Activated CD4-positive, alpha-beta T cell treated with anti-CD3 and anti-CD28 coated beads for 36 hours (primary cell): ENCODE measurements at regions of chr3 and their contacts with region 1.

Region 1: DNA sequence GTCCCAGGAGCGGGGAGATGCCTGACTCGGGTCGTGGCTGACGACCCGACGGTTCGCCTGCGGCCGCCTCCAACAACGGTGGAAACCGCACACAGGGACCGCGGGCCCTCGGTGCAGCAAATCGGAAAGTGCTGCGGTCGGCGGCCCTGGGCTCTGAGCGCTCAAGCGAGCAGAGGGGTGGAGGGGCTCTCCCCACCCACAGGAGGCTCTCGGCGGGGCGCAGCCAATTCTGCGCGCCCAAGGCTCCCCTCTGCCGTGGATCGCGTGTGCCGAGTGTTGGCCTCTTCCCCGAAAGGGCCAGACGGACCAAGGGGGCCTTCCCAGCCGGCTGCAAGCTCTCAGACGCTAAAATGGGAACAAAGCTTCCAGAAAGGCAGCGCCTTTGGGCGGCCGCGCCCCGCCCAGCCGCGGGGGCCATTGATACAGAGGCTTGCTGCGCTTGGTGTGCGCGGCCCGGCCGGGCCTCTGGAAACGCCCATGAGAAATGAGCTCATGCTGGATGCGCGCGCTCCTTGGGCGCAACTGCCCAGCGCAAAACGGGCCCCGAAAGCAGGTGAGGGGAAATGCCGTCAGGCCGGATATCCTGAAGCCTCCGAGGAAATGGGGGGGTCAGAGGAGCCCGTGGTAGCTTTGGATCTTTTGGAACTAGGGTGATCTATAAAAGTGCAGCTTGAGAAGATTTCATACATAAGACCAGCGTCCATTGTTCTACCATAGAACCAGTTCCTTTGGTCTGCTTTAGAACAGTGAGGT is 1.2 kb upstream of the GSK3B start:
- DNase-seq: peak; percentile 94
- ATAC-seq: peak; percentile 35
- H3K4me3 Mint-ChIP-seq: no peak overlapping the region
- H3K27ac Mint-ChIP-seq: no peak overlapping the region
- H3K4me1 Mint-ChIP-seq: peaks cover 17% of the 10 kb centered on the region
- H3K27me3 Mint-ChIP-seq: no peaks in the 10 kb centered on the region

Region 2: GRCh38 chr3:119240591-119241434 is 854.6 kb before region 1 on chr3 and contains the start of gene B4GALT4:
- CTCF ChIA-PET with region 1: no interaction called
- POLR2A ChIA-PET with region 1: no interaction called
- intact Hi-C with region 1: loop called (anchors 1 to 2 kb)
- DNase-seq: peak; percentile 86
- ATAC-seq: peak; percentile 75
- H3K4me3 Mint-ChIP-seq: peak within 1 kb of the TSS; percentile 89
- H3K27ac Mint-ChIP-seq: peak within 1 kb of the TSS; percentile 99
- H3K4me1 Mint-ChIP-seq: peaks cover 40% of the 10 kb centered on the region
- H3K27me3 Mint-ChIP-seq: no peaks in the 10 kb centered on the region
- total RNA-seq, gene B4GALT4: 16.6 to 16.7 TPM

Region 3: DNA sequence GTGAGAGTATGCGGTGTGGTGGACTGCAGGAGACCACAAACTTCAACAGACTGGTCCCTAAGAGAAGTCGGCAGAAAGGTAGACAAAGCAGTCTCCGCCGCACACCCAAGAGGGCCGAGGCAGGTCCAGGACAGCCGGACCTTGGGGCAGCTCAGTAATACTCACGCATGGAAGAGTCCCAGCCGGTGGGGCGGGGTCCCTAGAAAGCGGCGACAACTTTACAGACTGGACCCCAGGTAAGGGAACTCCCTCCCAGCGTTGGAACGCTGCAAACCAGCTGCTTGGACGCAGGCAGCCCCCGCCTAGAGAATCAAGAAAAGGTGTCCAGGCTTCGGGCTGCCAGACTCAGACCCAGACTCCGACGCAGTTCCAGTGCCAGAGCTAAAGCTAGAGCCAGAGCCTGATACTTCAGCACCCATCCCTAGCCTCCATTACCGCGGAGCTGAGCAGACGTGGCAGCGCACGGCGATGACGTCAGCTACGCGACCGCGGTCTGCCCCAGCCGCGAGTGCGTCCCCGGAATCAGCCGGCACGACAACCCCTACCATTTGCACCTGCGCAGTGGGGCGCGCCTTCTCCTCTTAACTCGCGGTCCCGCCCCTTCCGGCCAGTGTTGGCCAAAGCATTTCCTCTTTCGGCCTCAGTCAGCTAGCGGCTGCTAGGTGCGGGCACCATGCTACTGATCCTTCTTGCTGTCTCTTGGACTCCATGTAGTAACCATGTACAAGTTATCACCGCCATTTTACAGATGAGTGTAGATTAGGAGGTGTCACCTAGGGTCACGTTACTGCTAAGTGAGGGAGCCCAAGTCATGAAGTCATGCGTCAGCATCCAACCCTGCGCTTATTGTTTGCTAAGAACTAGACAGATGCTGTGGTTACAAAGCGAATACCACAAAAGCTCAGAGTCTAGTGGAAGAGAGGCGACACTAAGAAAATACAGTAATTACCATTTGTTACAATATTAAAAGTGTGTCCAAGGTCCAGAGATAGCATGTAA is 631.9 kb before region 1 on chr3 and contains the start of gene TMEM39A:
- CTCF ChIA-PET with region 1: interaction called, 5 read pairs
- POLR2A ChIA-PET with region 1: interaction called, 7 read pairs
- intact Hi-C with region 1: loop called (anchors 1 to 10 kb)
- DNase-seq: peak; percentile 99
- ATAC-seq: peak; percentile 89
- H3K4me3 Mint-ChIP-seq: peak within 1 kb of the TSS; percentile 99
- H3K27ac Mint-ChIP-seq: peak within 1 kb of the TSS; percentile 91
- H3K4me1 Mint-ChIP-seq: peaks cover 41% of the 10 kb centered on the region
- H3K27me3 Mint-ChIP-seq: no peaks in the 10 kb centered on the region
- total RNA-seq, gene TMEM39A: 24.5 to 30.5 TPM

Region 4: DNA sequence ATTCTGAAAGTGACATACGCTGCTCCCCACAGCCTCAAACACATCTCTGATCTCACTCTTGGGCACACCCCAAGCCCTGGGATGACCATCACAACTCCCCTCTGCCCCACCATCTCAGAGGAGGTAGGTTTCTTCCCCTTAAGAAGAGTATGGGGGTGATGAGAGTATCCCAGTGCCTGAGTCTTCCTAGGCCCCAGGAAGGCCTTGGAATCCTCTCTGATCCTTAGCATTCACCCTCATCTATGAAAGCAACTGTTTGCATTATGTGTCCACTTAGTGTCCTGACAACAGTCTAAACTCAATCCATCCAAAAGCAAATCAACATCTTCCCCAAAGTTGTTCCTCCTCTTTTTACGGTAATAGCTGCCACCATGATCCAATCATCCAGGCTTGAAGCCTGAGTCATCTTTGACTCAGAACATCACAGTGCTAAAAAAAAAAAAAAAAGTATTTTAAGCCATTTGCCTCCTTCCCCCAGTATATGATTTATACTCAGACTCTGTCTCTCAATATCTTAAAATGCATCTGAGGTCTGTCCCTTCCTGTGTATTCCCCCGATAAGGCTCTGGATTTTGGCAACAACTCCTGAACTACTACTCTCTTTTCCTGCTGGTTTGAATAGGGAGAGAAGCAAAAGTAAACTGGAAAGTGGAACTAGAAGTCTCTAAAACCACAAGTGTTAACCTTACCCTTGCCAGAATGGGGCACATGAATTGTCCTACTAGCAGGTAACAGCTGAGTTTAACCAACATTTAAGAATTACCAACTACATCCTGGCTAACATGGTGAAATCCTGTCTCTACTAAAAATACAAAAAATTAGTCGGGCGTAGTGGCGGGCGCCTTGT is 457.5 kb before region 1 on chr3:
- CTCF ChIA-PET with region 1: no interaction called
- POLR2A ChIA-PET with region 1: no interaction called
- intact Hi-C with region 1: loop called in 1 of 2 experiments (anchors 1 kb)
- DNase-seq: peak; percentile 14
- ATAC-seq: peak; percentile 34
- H3K4me3 Mint-ChIP-seq: no peak overlapping the region
- H3K27ac Mint-ChIP-seq: peak overlapping the region; percentile 92
- H3K4me1 Mint-ChIP-seq: peaks cover 38% of the 10 kb centered on the region
- H3K27me3 Mint-ChIP-seq: no peaks in the 10 kb centered on the region

Region 5: DNA sequence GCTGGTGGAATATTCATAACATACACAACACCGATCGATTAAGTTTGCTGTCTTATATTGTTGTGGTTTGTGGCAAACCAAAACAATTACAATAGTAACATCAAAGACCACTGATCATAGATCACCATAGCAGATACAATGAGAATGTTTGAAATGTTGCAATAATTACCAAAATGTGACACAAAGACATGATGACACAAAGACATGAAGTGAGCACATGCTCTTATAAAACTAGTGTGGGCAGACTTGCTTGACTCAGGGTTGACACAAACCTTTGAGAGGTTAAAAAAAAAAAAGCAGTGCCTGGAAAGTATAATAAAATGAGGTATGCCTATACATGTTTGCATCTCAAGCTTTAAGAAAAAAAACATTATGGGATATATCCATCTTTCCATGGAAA is 183.2 kb before region 1 on chr3:
- CTCF ChIA-PET with region 1: no interaction called
- POLR2A ChIA-PET with region 1: interaction called, 13 read pairs
- intact Hi-C with region 1: loop called (anchors 1 kb)
- DNase-seq: no peak
- ATAC-seq: peak; percentile 79
- H3K4me3 Mint-ChIP-seq: peak overlapping the region; percentile 44
- H3K27ac Mint-ChIP-seq: peak overlapping the region; percentile 90
- H3K4me1 Mint-ChIP-seq: peaks cover 27% of the 10 kb centered on the region
- H3K27me3 Mint-ChIP-seq: no peaks in the 10 kb centered on the region

Region 6: GRCh38 chr3:120348981-120349818 is 253.8 kb after region 1 on chr3 and contains the start of gene LRRC58:
- CTCF ChIA-PET with region 1: no interaction called
- POLR2A ChIA-PET with region 1: interaction called, 26 read pairs
- intact Hi-C with region 1: loop called (anchors 1 to 2 kb)
- DNase-seq: peak; percentile 93
- ATAC-seq: peak; percentile 88
- H3K4me3 Mint-ChIP-seq: peak within 1 kb of the TSS; percentile 91
- H3K27ac Mint-ChIP-seq: peak within 1 kb of the TSS; percentile 94
- H3K4me1 Mint-ChIP-seq: peaks cover 43% of the 10 kb centered on the region
- H3K27me3 Mint-ChIP-seq: peaks cover 2% of the 10 kb centered on the region
- total RNA-seq, gene LRRC58: 20.7 to 22.2 TPM

Region 7: DNA sequence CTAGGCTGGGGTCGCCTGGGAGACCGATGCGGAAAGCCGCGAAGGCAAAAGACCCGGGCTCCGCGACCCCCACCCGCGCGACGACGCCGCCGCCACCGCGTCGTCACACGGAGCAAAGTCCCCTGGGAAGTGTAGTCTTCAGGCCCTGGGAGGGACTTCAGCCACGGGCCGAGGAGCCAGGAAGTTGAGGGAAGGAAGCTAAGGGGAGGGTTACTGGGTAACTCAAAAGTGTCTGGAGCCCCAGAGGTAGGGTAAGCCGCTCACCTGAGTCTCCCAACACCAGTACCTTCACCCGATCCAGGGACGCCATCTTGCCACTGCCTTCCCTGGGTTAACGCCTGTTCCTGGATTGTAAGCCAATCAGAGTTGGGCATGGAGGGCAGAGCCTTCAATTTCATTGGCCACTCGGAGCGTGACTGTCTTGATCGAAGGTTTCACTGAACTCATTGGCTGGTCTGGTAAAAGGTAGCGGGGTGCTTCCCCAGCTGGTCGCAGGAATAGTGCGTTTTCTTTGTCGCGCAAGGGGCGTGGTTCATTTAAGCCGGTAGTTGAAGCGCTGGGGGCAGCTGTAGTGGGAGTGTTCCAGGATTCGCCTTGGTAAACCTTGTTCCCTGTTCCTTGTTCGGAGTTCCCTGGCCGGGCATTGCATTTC is 646.9 kb after region 1 on chr3 and contains the starts of genes GTF2E1 and RABL3:
- CTCF ChIA-PET with region 1: no interaction called
- POLR2A ChIA-PET with region 1: no interaction called
- intact Hi-C with region 1: loop called (anchors 1 kb)
- DNase-seq: peak; percentile 96
- ATAC-seq: peak; percentile 99
- H3K4me3 Mint-ChIP-seq: peak within 1 kb of the TSS; percentile 98
- H3K27ac Mint-ChIP-seq: peak within 1 kb of the TSS; percentile 95
- H3K4me1 Mint-ChIP-seq: peaks cover 28% of the 10 kb centered on the region
- H3K27me3 Mint-ChIP-seq: no peaks in the 10 kb centered on the region
- total RNA-seq, gene GTF2E1: 26.1 to 27.0 TPM
- total RNA-seq, gene RABL3: 35.5 to 37.8 TPM

Region 8: DNA sequence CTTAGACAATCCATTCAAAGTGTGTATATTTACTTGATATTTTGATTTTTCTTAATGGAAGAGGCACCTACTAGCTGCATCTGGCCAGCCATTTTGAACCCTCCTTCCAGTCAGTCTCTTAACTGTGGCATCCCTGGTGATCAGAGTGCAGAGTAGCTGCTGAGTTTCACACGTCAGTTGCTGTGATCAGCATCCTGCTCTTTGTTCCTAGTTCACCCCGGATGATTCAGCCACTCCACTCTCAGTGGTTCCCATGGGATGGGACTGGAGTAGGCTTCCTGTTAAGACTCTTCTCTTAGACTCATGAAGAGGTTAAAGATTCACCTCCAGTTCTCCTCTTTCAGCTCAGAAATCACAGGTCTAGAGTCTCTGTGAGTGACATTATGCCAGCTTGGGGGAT is 888.4 kb after region 1 on chr3:
- CTCF ChIA-PET with region 1: no interaction called
- POLR2A ChIA-PET with region 1: no interaction called
- intact Hi-C with region 1: no loop called
- DNase-seq: no peak
- ATAC-seq: no peak
- H3K4me3 Mint-ChIP-seq: no peak overlapping the region
- H3K27ac Mint-ChIP-seq: no peak overlapping the region
- H3K4me1 Mint-ChIP-seq: no peaks in the 10 kb centered on the region
- H3K27me3 Mint-ChIP-seq: peaks cover 4% of the 10 kb centered on the region